Activated naive CD4-positive, alpha-beta T cell treated with anti-CD3 and anti-CD28 coated beads for 36 hours (primary cell): ENCODE measurements at regions of chr14 and their contacts with region 1.

Region 1: DNA sequence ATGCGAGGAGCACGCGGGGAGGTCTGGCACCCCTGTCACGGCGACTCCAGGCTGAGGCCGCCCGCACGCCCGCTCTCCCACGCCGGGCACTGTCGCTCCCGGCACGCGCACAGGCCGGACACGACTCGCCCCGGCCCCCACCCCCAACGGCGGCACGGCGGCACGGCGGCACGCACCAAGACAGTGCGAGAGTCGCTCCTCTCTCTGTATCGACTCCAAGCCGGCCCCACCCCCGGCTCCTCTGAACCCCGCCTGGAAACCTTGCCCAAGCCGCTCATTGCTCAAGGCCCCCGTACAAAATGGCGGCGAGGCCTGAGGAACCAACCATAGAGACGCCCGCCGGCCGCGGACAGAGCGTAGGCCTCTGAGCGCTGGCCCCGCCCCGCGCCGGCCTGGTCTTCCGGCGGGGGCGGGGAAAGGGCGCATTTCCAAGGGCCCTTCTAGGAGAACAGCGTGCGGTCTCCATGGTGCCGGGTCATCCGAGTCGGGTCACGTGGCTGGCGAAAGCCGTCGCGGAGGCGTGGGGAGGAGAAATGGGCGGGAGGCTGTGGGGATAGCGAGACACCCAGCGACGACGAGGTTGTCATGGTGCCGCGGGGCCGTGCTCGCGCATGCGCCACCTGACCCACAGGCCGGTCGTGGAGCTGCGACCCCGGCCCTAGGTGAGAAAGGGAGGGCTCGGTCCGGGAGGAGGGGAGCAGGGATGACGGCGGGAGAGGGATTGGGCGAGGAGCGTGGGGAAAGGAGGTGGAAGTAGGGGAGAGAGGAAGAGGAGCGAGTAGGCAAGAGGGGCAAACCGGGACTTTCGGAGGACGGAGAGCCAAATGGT is at the start of gene CIPC:
- DNase-seq: peak; percentile 100
- H3K4me3 Mint-ChIP-seq: peak within 1 kb of the TSS; percentile 88
- H3K27ac Mint-ChIP-seq: peak within 1 kb of the TSS; percentile 96
- H3K4me1 Mint-ChIP-seq: peaks cover 38% of the 10 kb centered on the region
- H3K27me3 Mint-ChIP-seq: no peaks in the 10 kb centered on the region
- total RNA-seq, gene CIPC: 5.6 to 6.1 TPM

Region 2: DNA sequence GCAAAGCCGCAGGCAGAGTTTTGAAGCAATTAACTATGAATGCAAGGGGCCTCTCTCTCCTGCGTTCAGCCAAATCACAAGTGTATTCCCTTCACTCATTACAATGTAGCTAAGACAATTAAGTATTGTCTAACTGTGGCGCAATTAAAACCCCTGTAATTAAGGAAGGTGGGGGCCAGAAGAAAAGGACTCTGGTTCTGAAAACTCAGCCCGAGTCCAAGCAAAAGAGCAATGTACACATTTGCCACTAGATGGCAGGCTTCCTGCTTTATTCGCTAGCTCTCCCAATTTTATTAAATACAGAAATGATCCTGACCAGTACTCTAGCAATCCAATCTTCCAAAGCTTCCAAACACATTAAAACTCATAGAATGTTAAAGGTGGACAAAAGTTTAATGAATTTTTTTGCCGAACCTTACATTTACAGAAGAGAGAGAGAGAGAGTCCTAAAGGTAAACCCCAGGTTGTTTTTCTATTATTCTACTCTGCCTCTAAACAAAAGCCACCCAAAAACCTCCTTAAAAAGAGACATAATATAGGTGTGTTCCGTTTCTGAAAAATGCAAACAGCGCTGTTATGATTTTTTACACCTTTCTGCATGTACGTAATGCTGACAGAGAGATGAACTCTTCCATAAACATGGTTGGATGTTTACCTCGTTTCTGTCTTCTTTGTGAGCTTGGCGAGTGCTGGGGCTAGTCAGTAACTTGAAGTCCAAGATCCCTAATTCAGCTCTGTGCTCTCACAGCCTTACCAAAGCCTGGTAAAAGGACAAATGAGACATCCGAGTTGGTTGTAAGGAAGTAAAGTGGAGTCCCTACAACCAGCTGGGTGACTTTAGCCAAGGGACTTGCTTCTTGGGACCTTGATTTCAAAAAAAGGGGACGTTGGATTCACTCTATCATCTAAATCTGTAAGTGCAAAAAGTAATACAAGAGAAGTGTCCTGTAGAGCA is 387.6 kb before region 1 on chr14:
- CTCF ChIA-PET with region 1: interaction called, 10 read pairs
- intact Hi-C with region 1: no loop called
- DNase-seq: peak; percentile 53
- H3K4me3 Mint-ChIP-seq: no peak overlapping the region
- H3K27ac Mint-ChIP-seq: no peak overlapping the region
- H3K4me1 Mint-ChIP-seq: no peaks in the 10 kb centered on the region
- H3K27me3 Mint-ChIP-seq: peaks cover 3% of the 10 kb centered on the region

Region 3: DNA sequence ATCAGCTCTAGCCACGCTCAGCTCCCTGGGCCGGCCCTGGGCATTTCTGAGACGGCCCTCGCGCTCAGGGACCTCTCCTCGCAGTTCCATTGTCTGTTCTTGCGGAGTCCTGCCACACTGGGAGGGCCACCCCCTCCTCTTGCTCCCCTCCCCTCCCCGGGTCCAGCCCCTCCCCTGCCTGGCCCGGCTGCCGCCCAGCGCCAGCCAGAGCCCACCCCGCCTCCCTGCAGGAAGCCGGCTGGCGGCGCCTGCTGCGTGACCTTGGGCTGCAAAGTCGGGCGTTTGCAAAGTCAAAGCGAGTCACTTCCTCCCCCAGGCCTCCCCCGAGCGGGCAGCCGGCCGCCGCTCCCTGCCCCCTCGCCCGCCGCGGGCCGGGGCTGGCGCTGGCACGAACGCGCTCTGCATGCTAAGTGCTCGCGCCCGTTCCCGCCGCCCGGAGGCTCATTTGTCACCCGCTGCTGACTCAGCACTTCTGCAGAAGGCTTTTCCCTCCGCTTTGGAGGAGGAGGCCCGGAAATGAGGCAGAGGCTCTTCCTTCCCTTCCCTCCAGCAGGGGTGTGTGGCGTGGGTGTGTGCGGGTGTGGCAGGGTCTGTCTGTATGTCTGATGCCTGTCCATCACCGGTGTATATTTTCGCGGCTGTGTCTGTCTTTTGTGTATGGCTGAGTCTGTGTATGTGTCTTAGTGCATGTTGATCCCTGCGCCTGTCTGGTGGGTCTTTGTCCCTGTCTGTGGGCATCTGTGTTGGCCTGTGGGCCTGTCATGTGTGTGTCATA is 141.4 kb before region 1 on chr14:
- CTCF ChIA-PET with region 1: no interaction called
- intact Hi-C with region 1: loop called (anchors 1 kb)
- DNase-seq: peak; percentile 98
- H3K4me3 Mint-ChIP-seq: peak overlapping the region; percentile 80
- H3K27ac Mint-ChIP-seq: peak overlapping the region; percentile 97
- H3K4me1 Mint-ChIP-seq: peaks cover 72% of the 10 kb centered on the region
- H3K27me3 Mint-ChIP-seq: no peaks in the 10 kb centered on the region

Region 4: GRCh38 chr14:77067632-77068514 is 30.0 kb before region 1 on chr14:
- CTCF ChIA-PET with region 1: interaction called, 111 read pairs
- intact Hi-C with region 1: loop called (anchors 1 kb)
- DNase-seq: peak; percentile 71
- H3K4me3 Mint-ChIP-seq: no peak overlapping the region
- H3K27ac Mint-ChIP-seq: no peak overlapping the region
- H3K4me1 Mint-ChIP-seq: no peaks in the 10 kb centered on the region
- H3K27me3 Mint-ChIP-seq: peaks cover 2% of the 10 kb centered on the region

Region 5: DNA sequence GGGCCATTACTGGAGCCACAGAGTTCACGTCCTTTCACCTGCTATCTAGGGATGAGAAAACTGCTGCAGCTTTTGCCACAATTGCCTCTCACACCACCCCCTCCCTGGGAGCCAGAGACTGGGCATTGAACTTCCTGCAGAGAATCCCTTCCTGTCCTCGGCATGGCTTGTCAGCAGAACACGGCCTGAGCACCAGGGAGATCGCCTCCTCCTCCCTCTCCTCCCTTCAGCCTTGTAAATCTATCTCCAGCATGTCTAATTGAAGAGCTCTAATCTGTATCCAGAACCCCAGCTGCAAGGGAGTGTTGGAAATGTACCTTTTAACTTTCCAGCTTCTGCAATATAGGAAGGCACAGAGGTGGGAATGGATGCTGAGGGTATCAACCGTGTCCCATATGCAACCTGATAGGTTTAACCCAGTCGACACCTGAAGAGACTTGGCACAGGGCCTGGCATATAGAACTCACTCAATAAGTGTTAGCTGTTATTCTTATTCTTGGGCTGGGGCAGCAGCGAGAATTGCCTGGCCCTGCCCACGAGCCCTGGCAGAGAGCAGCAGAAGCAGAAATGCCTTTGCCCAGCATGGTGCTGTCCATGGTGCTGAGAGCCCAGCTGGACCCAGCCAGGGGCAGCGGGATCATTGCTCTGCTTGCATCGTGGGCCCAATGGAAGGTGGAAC is 110.5 kb after region 1 on chr14:
- CTCF ChIA-PET with region 1: no interaction called
- intact Hi-C with region 1: no loop called
- DNase-seq: peak; percentile 71
- H3K4me3 Mint-ChIP-seq: no peak overlapping the region
- H3K27ac Mint-ChIP-seq: no peak overlapping the region
- H3K4me1 Mint-ChIP-seq: no peaks in the 10 kb centered on the region
- H3K27me3 Mint-ChIP-seq: peaks cover under 1% of the 10 kb centered on the region

Region 6: GRCh38 chr14:77320238-77320935 is 222.5 kb after region 1 on chr14 and contains the start of gene POMT2:
- CTCF ChIA-PET with region 1: interaction called, 4 read pairs
- intact Hi-C with region 1: loop called (anchors 1 kb)
- DNase-seq: peak; percentile 91
- H3K4me3 Mint-ChIP-seq: peak within 1 kb of the TSS; percentile 91
- H3K27ac Mint-ChIP-seq: peak within 1 kb of the TSS; percentile 97
- H3K4me1 Mint-ChIP-seq: peaks cover 15% of the 10 kb centered on the region
- H3K27me3 Mint-ChIP-seq: no peaks in the 10 kb centered on the region
- total RNA-seq, gene POMT2: 11.3 to 14.5 TPM

Region 7: GRCh38 chr14:77760381-77761246 is 662.7 kb after region 1 on chr14 and contains the start of gene SNW1:
- CTCF ChIA-PET with region 1: no interaction called
- intact Hi-C with region 1: loop called (anchors 1 kb)
- DNase-seq: peak; percentile 95
- H3K4me3 Mint-ChIP-seq: peak within 1 kb of the TSS; percentile 94
- H3K27ac Mint-ChIP-seq: peak within 1 kb of the TSS; percentile 95
- H3K4me1 Mint-ChIP-seq: peaks cover 32% of the 10 kb centered on the region
- H3K27me3 Mint-ChIP-seq: no peaks in the 10 kb centered on the region
- total RNA-seq, gene SNW1: 117 to 129 TPM